ENCODE measurements at regions of chr11 and their contacts with region 1.

Region 1: GRCh38 chr11:20397281-20397680 is 9.8 kb downstream of the PRMT3 start:
- DNase-seq: peak; percentile 41
- H3K4me3 ChIP-seq: no peak overlapping the region
- H3K27ac ChIP-seq: no peak overlapping the region
- H3K4me1 ChIP-seq: no peaks in the 10 kb centered on the region
- H3K27me3 ChIP-seq: no peaks in the 10 kb centered on the region
- CTCF ChIP-seq: peak; percentile 33 to 57
- POLR2A ChIP-seq: no peak

Region 2: DNA sequence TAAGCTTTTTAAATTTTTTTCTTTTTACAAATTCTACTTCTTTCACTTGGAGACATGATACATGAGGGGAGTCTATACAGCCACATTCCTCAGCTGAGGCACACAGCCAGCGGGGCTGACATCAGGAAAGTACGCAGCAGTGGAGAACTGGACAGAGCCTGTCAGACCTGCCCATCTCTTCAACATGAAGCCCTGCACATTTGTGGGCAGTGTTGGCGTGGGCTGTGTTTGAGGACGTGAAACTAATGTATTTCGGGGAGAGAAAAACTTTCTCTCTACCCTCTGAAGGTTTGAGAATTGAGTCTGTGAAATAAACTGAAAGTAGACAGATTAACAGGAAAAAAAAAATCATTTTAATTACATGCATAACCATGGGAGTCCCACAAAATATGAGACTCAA is 118.6 kb before region 1 on chr11:
- CTCF ChIA-PET with region 1: no interaction called
- POLR2A ChIA-PET with region 1: no interaction called
- dilution Hi-C with region 1: no loop called
- intact Hi-C with region 1: no loop called
- DNase-seq: no peak
- H3K4me3 ChIP-seq: no peak overlapping the region
- H3K27ac ChIP-seq: no peak overlapping the region
- H3K4me1 ChIP-seq: no peaks in the 10 kb centered on the region
- H3K27me3 ChIP-seq: peaks cover 5 to 17% of the 10 kb centered on the region in 2 experiments
- CTCF ChIP-seq: no peak
- POLR2A ChIP-seq: no peak

Region 3: GRCh38 chr11:20407344-20407743 is 10.1 kb after region 1 on chr11:
- CTCF ChIA-PET with region 1: interaction called, 14 read pairs
- POLR2A ChIA-PET with region 1: no interaction called
- dilution Hi-C with region 1: no loop called
- intact Hi-C with region 1: no loop called
- DNase-seq: no peak
- H3K4me3 ChIP-seq: no peak overlapping the region
- H3K27ac ChIP-seq: no peak overlapping the region
- H3K4me1 ChIP-seq: no peaks in the 10 kb centered on the region
- H3K27me3 ChIP-seq: no peaks in the 10 kb centered on the region
- CTCF ChIP-seq: no peak
- POLR2A ChIP-seq: no peak

Region 4: DNA sequence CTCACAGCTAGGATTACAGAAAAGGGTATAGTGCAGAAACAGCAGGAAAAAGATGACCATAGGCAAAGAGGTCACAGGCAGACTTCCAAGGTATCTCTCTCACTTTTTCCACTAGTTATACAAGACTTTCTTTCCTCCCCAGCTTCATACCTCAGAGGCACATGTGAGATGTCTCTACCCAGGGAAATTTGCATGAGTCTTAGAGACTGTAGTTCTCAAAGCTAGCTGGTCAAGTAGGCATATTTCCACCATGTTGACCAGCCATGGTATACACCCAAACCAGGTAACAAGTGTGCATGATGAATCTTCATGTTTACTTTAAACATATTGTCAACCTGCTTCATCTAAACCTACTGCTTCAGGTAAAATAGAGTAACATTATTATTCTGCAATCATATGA is 18.2 kb after region 1 on chr11:
- CTCF ChIA-PET with region 1: interaction called, 12 read pairs
- POLR2A ChIA-PET with region 1: no interaction called
- dilution Hi-C with region 1: no loop called
- intact Hi-C with region 1: no loop called
- DNase-seq: no peak
- H3K4me3 ChIP-seq: no peak overlapping the region
- H3K27ac ChIP-seq: no peak overlapping the region
- H3K4me1 ChIP-seq: no peaks in the 10 kb centered on the region
- H3K27me3 ChIP-seq: no peaks in the 10 kb centered on the region
- CTCF ChIP-seq: no peak
- POLR2A ChIP-seq: no peak

Region 5: GRCh38 chr11:20429216-20429615 is 31.9 kb after region 1 on chr11:
- CTCF ChIA-PET with region 1: interaction called, 10 read pairs
- POLR2A ChIA-PET with region 1: no interaction called
- dilution Hi-C with region 1: no loop called
- intact Hi-C with region 1: no loop called
- DNase-seq: no peak
- H3K4me3 ChIP-seq: no peak overlapping the region
- H3K27ac ChIP-seq: no peak overlapping the region
- H3K4me1 ChIP-seq: no peaks in the 10 kb centered on the region
- H3K27me3 ChIP-seq: no peaks in the 10 kb centered on the region
- CTCF ChIP-seq: no peak
- POLR2A ChIP-seq: no peak

Region 6: DNA sequence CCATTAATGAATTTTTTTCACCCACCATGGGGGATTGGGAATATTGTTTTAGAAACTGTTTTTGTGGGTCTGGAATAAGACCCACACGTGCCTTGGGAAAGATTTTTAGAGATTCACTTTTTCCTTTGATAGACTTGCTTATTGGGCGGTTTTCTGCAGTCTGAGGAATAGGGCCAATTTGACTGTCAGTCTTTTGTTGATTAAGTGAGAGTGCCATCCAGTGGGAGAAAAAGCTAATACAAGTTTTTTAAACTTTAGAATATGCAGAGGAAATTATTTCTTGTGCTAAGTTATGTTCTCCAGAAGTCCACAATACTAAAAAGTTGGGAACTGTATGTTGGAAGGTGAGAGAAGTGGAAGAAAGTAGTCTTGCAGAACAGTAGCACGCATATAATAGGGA is 46.3 kb after region 1 on chr11:
- CTCF ChIA-PET with region 1: interaction called, 51 read pairs
- POLR2A ChIA-PET with region 1: no interaction called
- dilution Hi-C with region 1: no loop called
- intact Hi-C with region 1: loop called (anchors 1 kb)
- DNase-seq: peak; percentile 42
- H3K4me3 ChIP-seq: no peak overlapping the region
- H3K27ac ChIP-seq: no peak overlapping the region
- H3K4me1 ChIP-seq: no peaks in the 10 kb centered on the region
- H3K27me3 ChIP-seq: no peaks in the 10 kb centered on the region
- CTCF ChIP-seq: peak in 1 of 2 donors; percentile 16
- POLR2A ChIP-seq: no peak

Region 7: DNA sequence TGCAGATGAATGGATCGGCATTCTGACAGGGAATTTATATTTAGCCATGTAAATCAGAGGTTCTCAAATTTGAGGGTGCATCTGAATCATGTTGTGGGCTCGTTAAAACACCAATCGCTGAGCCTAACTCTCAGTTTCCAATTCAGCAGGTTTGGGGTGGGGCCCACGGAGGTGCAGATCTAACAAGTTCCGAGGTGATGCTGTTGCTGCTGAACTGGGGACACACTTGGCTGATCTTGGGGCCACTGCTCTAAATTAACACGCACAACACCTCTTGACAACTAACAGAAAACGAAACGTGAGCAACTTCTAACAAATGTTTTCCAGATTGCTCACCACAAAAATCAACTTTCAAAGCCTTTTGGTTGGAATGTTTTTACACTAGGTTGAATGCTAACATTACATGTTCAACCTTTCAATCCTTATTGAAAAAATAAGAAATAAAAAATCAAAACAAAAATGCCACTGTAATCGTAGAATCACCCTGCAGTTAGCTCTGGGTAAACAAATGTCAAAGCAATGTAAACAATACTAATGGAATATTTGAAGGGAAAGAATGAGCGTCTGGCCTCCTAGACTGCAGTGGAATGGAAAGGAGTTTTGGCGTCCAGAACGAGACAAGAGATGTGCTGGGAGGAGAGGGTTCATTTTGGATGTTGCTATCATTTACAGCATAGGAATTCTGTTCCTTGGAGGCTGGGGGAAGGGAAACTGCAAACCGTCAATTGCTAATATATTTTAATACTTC is 133.8 kb after region 1 on chr11:
- CTCF ChIA-PET with region 1: no interaction called
- POLR2A ChIA-PET with region 1: no interaction called
- dilution Hi-C with region 1: no loop called
- intact Hi-C with region 1: no loop called
- DNase-seq: no peak
- H3K4me3 ChIP-seq: no peak overlapping the region
- H3K27ac ChIP-seq: no peak overlapping the region
- H3K4me1 ChIP-seq: no peaks in the 10 kb centered on the region
- H3K27me3 ChIP-seq: no peaks in the 10 kb centered on the region
- CTCF ChIP-seq: no peak
- POLR2A ChIP-seq: no peak

Region 8: GRCh38 chr11:20609727-20610707 is 212.7 kb after region 1 on chr11:
- CTCF ChIA-PET with region 1: interaction called, 131 read pairs
- POLR2A ChIA-PET with region 1: no interaction called
- dilution Hi-C with region 1: no loop called
- intact Hi-C with region 1: loop called (anchors 1 kb)
- DNase-seq: peak; percentile 65
- H3K4me3 ChIP-seq: no peak overlapping the region
- H3K27ac ChIP-seq: no peak overlapping the region
- H3K4me1 ChIP-seq: no peaks in the 10 kb centered on the region
- H3K27me3 ChIP-seq: peaks cover 23 to 42% of the 10 kb centered on the region in 2 experiments
- CTCF ChIP-seq: peak; percentile 83 to 96
- POLR2A ChIP-seq: no peak

Measured in endothelial cell of umbilical vein (primary cell).